ENCODE measurements at regions of chr2 and their contacts with region 1.

Region 1: GRCh38 chr2:197113275-197113711 is 186.8 kb upstream of the PGAP1 start:
- DNase-seq: no peak
- ATAC-seq: peak; percentile 89
- H3K4me3 ChIP-seq: no peak overlapping the region
- H3K27ac ChIP-seq: no peak overlapping the region
- H3K4me1 ChIP-seq: peaks cover 3% of the 10 kb centered on the region; the same call in 1 of the 2 replicates
- H3K27me3 ChIP-seq: no peaks in the 10 kb centered on the region
- CTCF ChIP-seq: peak; percentile 38 to 62 (median 48)
- EP300 ChIP-seq: no peak
- POLR2A ChIP-seq: no peak
- RAD21 ChIP-seq: peak; percentile 65

Region 2: GRCh38 chr2:197130318-197130717 is 17.0 kb after region 1 on chr2:
- CTCF ChIA-PET with region 1: interaction called, 51 read pairs
- POLR2A ChIA-PET with region 1: interaction called, 7 read pairs
- RAD21 ChIA-PET with region 1: interaction called, 16 read pairs
- SMC1A ChIA-PET with region 1: interaction called, 51 read pairs
- in situ Hi-C with region 1: no loop called
- intact Hi-C with region 1: no loop called
- DNase-seq: peak; percentile 77
- ATAC-seq: peak; percentile 87
- H3K4me3 ChIP-seq: peak overlapping the region; percentile 43; the same call in 1 of the 2 replicates
- H3K27ac ChIP-seq: peak overlapping the region; percentile 86
- H3K4me1 ChIP-seq: peaks cover 29% of the 10 kb centered on the region
- H3K27me3 ChIP-seq: no peaks in the 10 kb centered on the region
- CTCF ChIP-seq: no peak
- EP300 ChIP-seq: no peak; a peak in 1 of 4 replicates
- POLR2A ChIP-seq: no peak
- RAD21 ChIP-seq: no peak

Region 3: GRCh38 chr2:197152451-197153228 is 39.3 kb after region 1 on chr2:
- CTCF ChIA-PET with region 1: interaction called, 45 read pairs
- POLR2A ChIA-PET with region 1: interaction called, 4 read pairs
- RAD21 ChIA-PET with region 1: interaction called, 24 read pairs
- SMC1A ChIA-PET with region 1: interaction called, 55 read pairs
- in situ Hi-C with region 1: no loop called
- intact Hi-C with region 1: no loop called
- DNase-seq: peak; percentile 67
- ATAC-seq: peak; percentile 93
- H3K4me3 ChIP-seq: peak overlapping the region; percentile 25; the same call in 1 of the 2 replicates
- H3K27ac ChIP-seq: peak overlapping the region; percentile 48
- H3K4me1 ChIP-seq: peaks cover 34% of the 10 kb centered on the region
- H3K27me3 ChIP-seq: no peaks in the 10 kb centered on the region
- CTCF ChIP-seq: peak in 2 of 3 experiments; percentile 31 to 39; a peak in 2 of 6 replicates
- EP300 ChIP-seq: peak in 1 of 2 experiments; percentile 44; a peak in 1 of 4 replicates
- POLR2A ChIP-seq: no peak
- RAD21 ChIP-seq: no peak; the same call in 1 of the 2 replicates

Region 4: DNA sequence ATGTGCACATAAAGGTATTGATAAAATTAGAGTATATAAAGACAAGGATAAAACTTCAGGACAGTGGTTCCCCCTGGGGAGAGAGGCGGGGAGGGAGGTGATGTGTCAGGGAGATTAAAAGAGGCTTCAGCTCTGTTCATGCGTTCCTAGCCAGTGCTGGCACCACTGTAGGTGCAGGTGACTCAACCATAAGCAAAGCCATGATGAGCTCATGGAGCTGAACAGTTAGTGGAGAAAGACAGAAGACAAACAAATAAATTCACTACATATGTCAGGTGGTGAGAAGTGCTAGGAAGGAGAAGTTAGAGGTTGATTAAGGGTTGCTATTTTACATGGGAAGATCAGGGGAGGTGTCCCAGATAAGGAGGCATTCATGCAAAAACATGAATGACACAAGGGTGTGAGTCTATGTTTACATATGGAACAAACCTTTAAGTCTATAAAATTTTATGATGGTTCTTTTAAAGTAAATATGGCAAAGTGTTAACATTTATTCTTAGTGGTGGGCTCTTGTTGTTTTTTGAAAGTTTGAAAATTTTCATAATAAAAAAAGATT is 61.3 kb after region 1 on chr2:
- CTCF ChIA-PET with region 1: interaction called, 398 read pairs
- POLR2A ChIA-PET with region 1: interaction called, 14 read pairs
- RAD21 ChIA-PET with region 1: interaction called, 207 read pairs
- SMC1A ChIA-PET with region 1: interaction called, 478 read pairs
- in situ Hi-C with region 1: no loop called
- intact Hi-C with region 1: no loop called
- DNase-seq: no peak
- ATAC-seq: no peak
- H3K4me3 ChIP-seq: no peak overlapping the region
- H3K27ac ChIP-seq: no peak overlapping the region
- H3K4me1 ChIP-seq: no peaks in the 10 kb centered on the region; the same call in 1 of the 2 replicates
- H3K27me3 ChIP-seq: no peaks in the 10 kb centered on the region
- CTCF ChIP-seq: no peak
- EP300 ChIP-seq: no peak
- POLR2A ChIP-seq: no peak
- RAD21 ChIP-seq: no peak

Region 5: DNA sequence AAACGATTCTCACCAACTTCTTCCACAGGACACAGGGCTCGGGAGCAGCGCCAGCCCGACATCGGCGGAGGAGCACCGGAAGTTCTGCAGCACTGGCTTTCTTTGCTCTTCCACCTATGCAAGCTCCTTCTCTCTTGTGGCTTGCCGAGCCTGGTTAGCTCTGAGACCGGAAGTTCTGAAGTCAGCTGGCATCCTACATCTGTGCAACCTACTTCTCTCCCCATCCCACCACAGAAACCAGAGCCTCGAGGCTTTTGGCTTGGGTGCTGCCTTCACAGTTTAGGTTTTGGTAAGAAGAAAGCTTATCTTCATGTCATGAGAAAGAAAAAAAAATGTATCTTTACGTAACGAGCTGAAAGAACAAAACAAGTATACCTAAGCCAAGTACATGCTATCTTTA is 85.6 kb after region 1 on chr2:
- CTCF ChIA-PET with region 1: interaction called, 40 read pairs
- POLR2A ChIA-PET with region 1: no interaction called
- RAD21 ChIA-PET with region 1: interaction called, 5 read pairs
- SMC1A ChIA-PET with region 1: interaction called, 11 read pairs
- in situ Hi-C with region 1: no loop called
- intact Hi-C with region 1: no loop called
- DNase-seq: peak; percentile 98
- ATAC-seq: peak; percentile 98
- H3K4me3 ChIP-seq: peak overlapping the region; percentile 53; the same call in 1 of the 2 replicates
- H3K27ac ChIP-seq: peak overlapping the region; percentile 87
- H3K4me1 ChIP-seq: peaks cover 36% of the 10 kb centered on the region
- H3K27me3 ChIP-seq: no peaks in the 10 kb centered on the region
- CTCF ChIP-seq: no peak
- EP300 ChIP-seq: peak; percentile 71 to 84
- POLR2A ChIP-seq: peak; percentile 87
- RAD21 ChIP-seq: no peak; the same call in 1 of the 2 replicates

Region 6: GRCh38 chr2:197310271-197310985 is 197.1 kb after region 1 on chr2 and contains the start of gene ANKRD44:
- CTCF ChIA-PET with region 1: interaction called, 31 read pairs
- POLR2A ChIA-PET with region 1: interaction called, 4 read pairs
- RAD21 ChIA-PET with region 1: interaction called, 47 read pairs
- SMC1A ChIA-PET with region 1: interaction called, 54 read pairs
- in situ Hi-C with region 1: loop called (anchors 5 kb)
- intact Hi-C with region 1: loop called (anchors 2 kb)
- DNase-seq: no peak
- ATAC-seq: peak; percentile 73
- H3K4me3 ChIP-seq: peak within 1 kb of the TSS; percentile 98
- H3K27ac ChIP-seq: peak within 1 kb of the TSS; percentile 99
- H3K4me1 ChIP-seq: peaks cover 21% of the 10 kb centered on the region
- H3K27me3 ChIP-seq: no peaks in the 10 kb centered on the region
- CTCF ChIP-seq: peak; percentile 17 to 64 (median 23); a peak in 3 of 6 replicates
- EP300 ChIP-seq: 0 out of 4 replicates have a peak, but pooled peaks of 1 of the 2 experiments have one; percentile 21
- POLR2A ChIP-seq: peak; percentile 80
- RAD21 ChIP-seq: peak; percentile 55
- polyA plus RNA-seq, gene ANKRD44: 19.1 to 29.1 TPM

Region 7: DNA sequence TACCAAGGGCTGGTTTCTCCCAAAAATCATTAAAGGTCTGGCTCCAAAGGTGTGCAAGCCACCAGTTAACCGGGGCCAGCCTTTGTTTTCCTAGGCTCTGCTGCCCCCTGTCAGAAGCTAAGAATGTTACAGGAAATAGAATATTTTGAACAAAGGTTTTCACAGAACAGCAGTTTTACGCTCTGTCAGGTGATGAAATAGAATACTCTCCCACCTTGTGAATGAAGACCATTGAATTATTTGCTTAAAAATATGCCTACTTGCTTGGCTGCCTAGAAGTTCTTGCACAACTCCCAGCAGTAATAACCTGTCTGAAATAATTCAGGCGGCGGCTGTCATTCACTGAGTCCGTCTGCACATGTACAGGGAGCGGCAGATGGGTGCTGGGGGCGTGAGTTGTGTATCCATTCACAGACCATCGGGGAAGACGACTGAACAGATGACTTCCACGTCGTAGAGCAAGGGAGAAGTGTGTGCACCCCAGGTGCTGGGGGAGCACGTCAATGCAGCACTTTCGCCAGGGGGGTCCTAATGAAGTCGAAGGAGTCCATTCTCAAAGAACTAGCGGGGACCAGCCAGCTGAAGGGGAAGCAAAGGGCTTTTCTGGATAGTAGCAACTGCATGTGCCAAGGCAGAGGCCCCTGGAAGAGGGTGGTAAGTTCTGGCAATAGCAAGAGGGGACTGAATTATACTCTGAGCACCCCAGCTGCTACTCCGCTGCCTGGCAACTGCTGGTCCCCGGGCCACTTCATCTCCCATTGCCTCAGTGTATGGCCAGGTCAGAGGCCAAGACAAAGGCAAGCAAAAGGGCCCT is 265.4 kb after region 1 on chr2:
- CTCF ChIA-PET with region 1: interaction called, 31 read pairs
- POLR2A ChIA-PET with region 1: interaction called, 3 read pairs
- RAD21 ChIA-PET with region 1: interaction called, 20 read pairs
- SMC1A ChIA-PET with region 1: interaction called, 18 read pairs
- in situ Hi-C with region 1: loop called (anchors 5 kb)
- intact Hi-C with region 1: loop called (anchors 1 kb)
- DNase-seq: no peak
- ATAC-seq: peak; percentile 80
- H3K4me3 ChIP-seq: no peak overlapping the region
- H3K27ac ChIP-seq: no peak overlapping the region
- H3K4me1 ChIP-seq: peaks cover 12% of the 10 kb centered on the region
- H3K27me3 ChIP-seq: no peaks in the 10 kb centered on the region; a peak in 1 of 4 replicates
- CTCF ChIP-seq: peak; percentile 64 to 80 (median 80)
- EP300 ChIP-seq: no peak
- POLR2A ChIP-seq: no peak
- RAD21 ChIP-seq: peak; percentile 99